ENCODE measurements at regions of chr1 and their contacts with region 1.

Region 1: GRCh38 chr1:111197598-111198284 is 2.7 kb downstream of the DENND2D start:
- DNase-seq: peak; percentile 43 to 78 (median 69)
- H3K4me3 ChIP-seq: peak overlapping the region; percentile 96
- H3K4me3 Mint-ChIP-seq: peak overlapping the region; percentile 97 to 100 (median 99)
- H3K27ac ChIP-seq: peak overlapping the region; percentile 62
- H3K27ac Mint-ChIP-seq: peak overlapping the region; percentile 93 to 100 (median 96)
- H3K4me1 ChIP-seq: peaks cover 69% of the 10 kb centered on the region
- H3K4me1 Mint-ChIP-seq: peaks cover 76 to 78% (median 78%) of the 10 kb centered on the region in 3 donors
- H3K27me3 ChIP-seq: no peaks in the 10 kb centered on the region
- H3K27me3 Mint-ChIP-seq: no peaks in the 10 kb centered on the region

Region 2: GRCh38 chr1:111183308-111184069 is 14.3 kb before region 1 on chr1:
- CTCF ChIA-PET with region 1: interaction called, 6 read pairs
- POLR2A ChIA-PET with region 1: interaction called, 11 read pairs
- DNase-seq: no peak
- H3K4me3 ChIP-seq: no peak overlapping the region
- H3K4me3 Mint-ChIP-seq: no peak overlapping the region
- H3K27ac ChIP-seq: no peak overlapping the region
- H3K27ac Mint-ChIP-seq: peak overlapping the region; percentile 10 to 90 (median 48)
- H3K4me1 ChIP-seq: peaks cover 33% of the 10 kb centered on the region
- H3K4me1 Mint-ChIP-seq: peaks cover 70 to 95% (median 90%) of the 10 kb centered on the region in 3 donors
- H3K27me3 ChIP-seq: no peaks in the 10 kb centered on the region
- H3K27me3 Mint-ChIP-seq: no peaks in the 10 kb centered on the region

Region 3: DNA sequence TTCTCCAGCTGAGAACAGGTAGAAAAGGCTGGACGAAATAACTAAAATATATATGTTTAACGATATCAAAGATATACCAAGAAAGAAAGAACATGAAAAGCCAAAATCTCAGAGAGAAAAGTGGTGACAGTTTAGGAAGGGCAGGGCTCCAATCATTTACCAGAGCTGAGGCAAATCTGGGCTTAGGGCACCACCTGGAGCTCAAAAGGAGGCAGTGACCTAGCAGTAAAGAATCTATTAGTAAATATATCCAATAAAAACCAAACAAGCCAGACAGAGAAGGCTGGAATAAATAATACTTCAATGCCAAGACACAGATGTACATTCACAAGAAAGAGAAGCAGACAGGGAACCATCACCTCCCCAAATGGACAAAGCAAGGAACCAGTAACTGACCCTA is 136.4 kb after region 1 on chr1:
- CTCF ChIA-PET with region 1: interaction called, 17 read pairs
- POLR2A ChIA-PET with region 1: no interaction called
- DNase-seq: peak; percentile 6 to 73 (median 49)
- H3K4me3 ChIP-seq: no peak overlapping the region
- H3K4me3 Mint-ChIP-seq: peak overlapping the region in 1 of 7 donors; percentile 4
- H3K27ac ChIP-seq: no peak overlapping the region
- H3K27ac Mint-ChIP-seq: peak overlapping the region in 6 of 8 donors; percentile 2 to 80 (median 74)
- H3K4me1 ChIP-seq: peaks cover 4% of the 10 kb centered on the region
- H3K4me1 Mint-ChIP-seq: peaks cover 4 to 14% (median 5%) of the 10 kb centered on the region in 3 donors
- H3K27me3 ChIP-seq: no peaks in the 10 kb centered on the region
- H3K27me3 Mint-ChIP-seq: peaks cover 2 to 3% of the 10 kb centered on the region in 2 donors

Measured in CD8-positive, alpha-beta memory T cell (primary cell).